Natural killer cell (primary cell): ENCODE measurements at regions of chr4 and their contacts with region 1.

Region 1: GRCh38 chr4:112321776-112322684 is 24.9 kb downstream of the ALPK1 start:
- DNase-seq: peak; percentile 62 to 90
- ATAC-seq: peak; percentile 72 to 86 (median 79)
- H3K4me3 ChIP-seq: no peak overlapping the region
- H3K4me3 Mint-ChIP-seq: no peak overlapping the region
- H3K27ac ChIP-seq: no peak overlapping the region
- H3K27ac Mint-ChIP-seq: peak overlapping the region in 1 of 2 donors; percentile 31
- H3K4me1 ChIP-seq: peaks cover 6% of the 10 kb centered on the region
- H3K4me1 Mint-ChIP-seq: peaks cover 16 to 27% of the 10 kb centered on the region in 2 donors
- H3K27me3 ChIP-seq: no peaks in the 10 kb centered on the region
- H3K27me3 Mint-ChIP-seq: peaks cover 5 to 7% of the 10 kb centered on the region in 2 donors
- CTCF ChIP-seq: peak; percentile 98

Region 2: DNA sequence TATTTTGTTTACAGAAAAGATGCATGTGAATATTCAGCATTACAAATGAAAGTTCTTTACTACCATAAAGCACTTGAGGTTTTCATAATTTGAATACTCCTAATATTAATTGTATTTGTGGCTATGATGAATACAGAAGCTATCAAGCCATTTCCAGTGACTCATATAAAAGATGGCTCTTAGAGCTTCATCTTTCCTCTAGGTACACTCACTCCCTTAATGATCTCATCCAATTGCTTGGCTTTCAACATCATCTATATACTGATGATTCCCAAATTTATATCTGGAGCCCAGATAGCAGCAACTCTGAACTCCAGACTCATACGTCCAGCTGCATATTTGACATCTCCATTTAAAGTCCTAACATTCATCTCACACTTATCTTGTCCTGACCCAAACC is 360.2 kb before region 1 on chr4:
- intact Hi-C with region 1: no loop called
- DNase-seq: no peak
- ATAC-seq: no peak
- H3K4me3 ChIP-seq: no peak overlapping the region
- H3K4me3 Mint-ChIP-seq: no peak overlapping the region
- H3K27ac ChIP-seq: no peak overlapping the region
- H3K27ac Mint-ChIP-seq: no peak overlapping the region
- H3K4me1 ChIP-seq: no peaks in the 10 kb centered on the region
- H3K4me1 Mint-ChIP-seq: no peaks in the 10 kb centered on the region
- H3K27me3 ChIP-seq: no peaks in the 10 kb centered on the region
- H3K27me3 Mint-ChIP-seq: no peaks in the 10 kb centered on the region
- CTCF ChIP-seq: no peak

Region 3: GRCh38 chr4:112284662-112285411 is 37.2 kb before region 1 on chr4:
- intact Hi-C with region 1: loop called (anchors 5 kb)
- DNase-seq: peak in 1 of 2 donors; percentile 74
- ATAC-seq: peak in 2 of 3 donors; percentile 4 to 11
- H3K4me3 ChIP-seq: peak overlapping the region; percentile 83
- H3K4me3 Mint-ChIP-seq: peak overlapping the region; percentile 95
- H3K27ac ChIP-seq: peak overlapping the region; percentile 67
- H3K27ac Mint-ChIP-seq: peak overlapping the region; percentile 88 to 89
- H3K4me1 ChIP-seq: peaks cover 37% of the 10 kb centered on the region
- H3K4me1 Mint-ChIP-seq: peaks cover 69 to 73% of the 10 kb centered on the region in 2 donors
- H3K27me3 ChIP-seq: no peaks in the 10 kb centered on the region
- H3K27me3 Mint-ChIP-seq: no peaks in the 10 kb centered on the region
- CTCF ChIP-seq: no peak

Region 4: DNA sequence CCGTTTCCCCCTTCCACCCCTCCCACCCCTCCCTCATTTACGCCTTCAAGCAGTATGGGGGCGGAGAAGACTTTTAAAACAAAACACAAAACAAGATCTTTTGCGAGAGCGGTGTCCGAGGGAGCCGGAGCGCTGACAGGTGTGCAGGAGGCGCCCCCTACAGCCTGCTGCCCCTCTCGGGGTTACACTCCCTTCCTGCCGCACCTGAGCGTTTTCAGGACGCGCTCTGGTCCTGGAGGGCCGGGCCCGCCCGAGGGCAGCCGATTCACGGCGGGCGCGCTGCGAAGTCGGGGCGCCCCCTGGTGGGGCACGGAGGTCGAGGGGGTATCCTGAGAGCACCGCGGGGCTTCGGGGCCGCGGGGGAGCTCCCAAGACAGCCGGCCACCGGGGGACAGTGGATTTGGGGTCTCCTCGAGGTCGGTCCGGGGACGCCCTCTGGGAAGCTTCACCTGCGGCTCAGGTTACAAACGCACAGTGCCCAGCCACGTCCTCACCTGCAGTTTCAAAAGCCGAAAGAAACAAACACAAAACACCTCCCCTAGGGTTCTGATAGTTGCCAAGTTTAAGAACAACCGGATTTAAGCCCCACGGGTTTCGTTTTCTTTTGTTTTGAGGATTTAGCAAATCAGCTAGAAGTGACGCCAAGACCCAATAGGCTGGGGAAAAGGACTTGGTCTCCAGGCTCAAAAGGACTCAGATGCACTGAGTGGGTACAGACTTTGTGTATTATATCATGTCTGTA is 201.9 kb after region 1 on chr4:
- intact Hi-C with region 1: loop called (anchors 2 kb)
- DNase-seq: peak; percentile 58 to 81
- ATAC-seq: peak; percentile 85 to 91 (median 87)
- H3K4me3 ChIP-seq: peak overlapping the region; percentile 9
- H3K4me3 Mint-ChIP-seq: peak overlapping the region; percentile 93
- H3K27ac ChIP-seq: no peak overlapping the region
- H3K27ac Mint-ChIP-seq: no peak overlapping the region
- H3K4me1 ChIP-seq: peaks cover 33% of the 10 kb centered on the region
- H3K4me1 Mint-ChIP-seq: peaks cover 14 to 26% of the 10 kb centered on the region in 2 donors
- H3K27me3 ChIP-seq: peaks cover 44% of the 10 kb centered on the region
- H3K27me3 Mint-ChIP-seq: peaks cover 48 to 72% of the 10 kb centered on the region in 2 donors
- CTCF ChIP-seq: peak; percentile 75